Astrocyte of the cerebellum (primary cell): ENCODE measurements at regions of chr3 and their contacts with region 1.

Region 1: DNA sequence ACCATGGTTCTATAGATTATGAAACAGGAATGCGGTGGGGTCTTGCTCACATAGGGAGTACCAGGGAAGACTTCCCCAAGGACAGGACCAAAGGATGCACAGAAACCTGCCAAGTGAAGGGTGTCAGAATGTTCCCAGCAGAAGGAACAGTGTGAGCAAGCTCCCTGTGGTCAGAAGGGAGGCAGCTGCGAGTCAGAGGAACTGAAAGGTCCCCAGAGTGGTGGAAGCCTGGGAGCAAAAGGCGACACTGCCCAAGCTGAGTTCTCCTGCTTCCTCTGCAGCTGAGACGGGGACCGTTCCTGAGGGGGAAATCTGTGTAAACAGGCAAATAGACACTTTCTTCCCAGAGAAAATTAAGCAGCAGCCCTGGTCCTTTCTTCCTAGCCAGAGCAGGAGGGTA is 14.2 kb upstream of the SLC6A6 start:
- DNase-seq: no peak
- H3K4me3 ChIP-seq: no peak overlapping the region
- CTCF ChIP-seq: no peak

Region 2: DNA sequence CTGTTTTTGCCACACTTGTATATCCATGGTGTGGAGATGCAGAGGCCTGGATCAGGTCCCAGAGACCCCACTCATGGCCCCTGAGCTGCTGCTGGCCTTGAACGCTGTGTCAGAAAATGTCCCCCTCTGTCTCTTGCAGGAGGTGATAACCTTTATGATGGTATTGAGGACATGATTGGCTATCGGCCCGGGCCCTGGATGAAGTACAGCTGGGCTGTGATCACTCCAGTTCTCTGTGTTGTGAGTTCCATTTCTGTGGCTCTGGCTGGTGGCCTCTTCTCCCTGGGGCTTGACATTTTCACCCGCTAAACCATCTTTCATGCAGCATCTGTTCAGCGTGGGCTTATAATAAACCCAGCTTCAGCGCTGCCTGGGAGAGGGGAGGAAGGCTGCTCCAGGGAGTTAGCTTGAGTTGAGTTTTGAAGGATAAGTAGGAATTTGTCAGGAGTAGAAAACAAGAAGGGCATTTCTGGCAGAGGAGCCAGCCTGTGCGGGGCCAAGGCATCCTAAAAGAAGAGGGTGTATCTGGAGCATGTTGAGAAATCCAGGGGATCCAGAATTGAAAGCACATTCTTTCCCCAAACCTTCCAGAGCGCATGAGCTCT is 90.8 kb after region 1 on chr3:
- in situ Hi-C with region 1: loop called (anchors 5 kb)
- DNase-seq: no peak
- H3K4me3 ChIP-seq: no peak overlapping the region
- CTCF ChIP-seq: no peak